ENCODE measurements at regions of chr9 and their contacts with region 1.

Region 1: DNA sequence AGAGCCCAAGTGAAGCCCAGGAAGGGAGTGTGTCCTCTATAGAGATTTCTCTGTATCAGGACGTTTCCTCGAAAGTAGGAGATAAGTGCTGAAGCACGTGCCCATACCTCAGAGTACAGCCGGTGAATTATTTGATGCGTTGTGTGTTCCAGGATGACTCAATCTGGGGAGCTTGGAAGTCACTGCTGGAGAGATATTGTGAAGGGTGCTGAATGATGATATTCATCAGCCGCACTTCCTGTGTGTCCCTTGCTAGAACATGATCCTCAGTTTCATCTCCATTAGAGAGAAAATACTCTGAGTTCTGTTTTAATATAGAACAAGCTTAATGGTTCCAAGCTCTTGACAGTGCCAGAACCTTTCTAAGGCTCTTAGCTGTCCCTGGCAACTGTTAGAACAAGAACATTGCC is 402.3 kb upstream of the ADAMTSL1 start:
- DNase-seq: no peak
- H3K4me3 ChIP-seq: no peak overlapping the region
- H3K27ac ChIP-seq: no peak overlapping the region
- H3K4me1 ChIP-seq: no peaks in the 10 kb centered on the region
- H3K27me3 ChIP-seq: no peaks in the 10 kb centered on the region
- CTCF ChIP-seq: no peak
- EP300 ChIP-seq: no peak
- POLR2A ChIP-seq: no peak
- RAD21 ChIP-seq: no peak

Region 2: DNA sequence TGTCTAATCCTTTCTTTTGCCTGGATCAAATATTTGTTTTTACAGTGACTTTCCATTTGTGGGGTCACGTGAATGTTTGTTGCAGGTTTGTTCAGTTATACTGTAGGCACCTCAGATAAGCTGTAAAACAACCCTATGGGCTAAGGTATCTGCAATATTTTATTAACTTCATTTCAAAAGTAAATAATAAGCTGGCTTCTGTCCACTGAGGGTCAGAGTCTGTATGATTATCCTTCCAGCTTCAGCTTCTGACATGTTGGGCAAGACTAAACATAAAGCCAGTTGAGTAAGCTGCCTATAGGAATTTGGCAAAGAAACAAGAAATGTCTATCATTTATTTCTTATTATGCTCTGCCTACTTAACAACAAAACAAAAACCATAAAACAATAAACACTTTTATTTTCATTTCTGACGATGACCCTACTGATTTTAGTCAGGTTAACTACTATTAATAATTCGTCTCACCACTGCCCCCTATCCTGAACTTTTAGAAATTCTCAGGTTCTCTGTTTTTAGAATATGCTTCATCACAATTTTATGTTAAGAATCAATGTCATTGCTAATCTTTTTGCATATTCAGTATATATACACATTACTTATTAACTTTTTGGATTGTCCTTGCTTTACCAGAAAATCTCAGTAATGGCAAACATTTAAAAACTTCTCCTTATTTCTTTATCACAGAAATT is 11.3 kb before region 1 on chr9:
- CTCF ChIA-PET with region 1: interaction called, 15 read pairs
- POLR2A ChIA-PET with region 1: no interaction called
- DNase-seq: no peak
- H3K4me3 ChIP-seq: no peak overlapping the region
- H3K27ac ChIP-seq: no peak overlapping the region
- H3K4me1 ChIP-seq: no peaks in the 10 kb centered on the region
- H3K27me3 ChIP-seq: no peaks in the 10 kb centered on the region
- CTCF ChIP-seq: peak in 1 of 3 experiments; percentile 28; a peak in 1 of 4 replicates
- EP300 ChIP-seq: no peak
- POLR2A ChIP-seq: no peak
- RAD21 ChIP-seq: peak in 1 of 2 experiments; percentile 23; a peak in 2 of 4 replicates

Region 3: GRCh38 chr9:18229992-18230676 is 158.5 kb after region 1 on chr9:
- CTCF ChIA-PET with region 1: no interaction called
- POLR2A ChIA-PET with region 1: no interaction called
- DNase-seq: no peak
- H3K4me3 ChIP-seq: no peak overlapping the region
- H3K27ac ChIP-seq: no peak overlapping the region
- H3K4me1 ChIP-seq: no peaks in the 10 kb centered on the region
- H3K27me3 ChIP-seq: no peaks in the 10 kb centered on the region
- CTCF ChIP-seq: peak in 1 of 3 experiments; percentile 4; a peak in 2 of 4 replicates
- EP300 ChIP-seq: no peak
- POLR2A ChIP-seq: no peak
- RAD21 ChIP-seq: 0 out of 4 replicates have a peak, but pooled peaks of 1 of the 2 experiments have one; percentile 3

Measured in H1 (cell line).